Psoas muscle (tissue), 8 donors: ENCODE measurements at regions of chr1 and their contacts with region 1.

Region 1: DNA sequence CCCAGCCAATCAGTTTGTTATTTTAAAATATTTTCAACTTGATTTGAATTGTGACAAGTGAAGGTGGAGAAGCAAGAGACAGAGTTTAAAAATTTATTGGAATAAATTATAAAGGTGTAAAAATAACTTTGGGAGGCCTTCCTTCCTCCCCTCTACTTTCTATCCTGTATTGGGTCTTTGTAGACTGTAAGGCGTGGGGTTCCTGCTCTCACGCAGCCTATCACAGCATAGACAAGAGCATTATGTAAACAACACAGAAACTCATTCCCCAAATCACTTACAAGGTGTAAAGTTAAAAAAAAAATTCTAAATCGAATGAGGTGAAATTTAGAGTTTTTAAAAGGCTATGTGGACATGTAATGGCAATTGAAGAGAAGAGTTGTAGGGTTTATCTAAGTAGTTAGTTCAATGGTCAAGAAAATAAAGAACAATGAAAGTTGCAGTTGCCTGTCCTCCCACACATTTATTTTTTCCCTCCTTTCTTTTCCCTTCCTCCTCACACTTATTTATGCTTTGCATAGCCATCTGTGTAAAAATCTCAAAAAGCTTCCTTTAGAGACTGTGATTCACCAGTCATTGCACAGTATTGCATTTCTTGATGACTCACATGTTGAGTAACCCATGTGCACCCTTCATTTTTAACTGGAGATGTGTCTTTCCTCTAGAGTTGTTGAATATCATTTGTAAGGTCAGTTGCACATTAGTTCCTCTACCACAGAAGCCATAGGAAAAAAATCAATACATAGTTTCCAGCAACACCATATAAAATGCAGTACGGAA is 242.2 kb downstream of the PTPRC start:
- DNase-seq: no peak
- ATAC-seq: peak; percentile 42 to 71 (median 52)
- H3K4me3 ChIP-seq: no peak overlapping the region
- H3K27ac ChIP-seq: no peak overlapping the region
- H3K4me1 ChIP-seq: no peaks in the 10 kb centered on the region
- H3K27me3 ChIP-seq: no peaks in the 10 kb centered on the region
- CTCF ChIP-seq: no peak

Region 2: DNA sequence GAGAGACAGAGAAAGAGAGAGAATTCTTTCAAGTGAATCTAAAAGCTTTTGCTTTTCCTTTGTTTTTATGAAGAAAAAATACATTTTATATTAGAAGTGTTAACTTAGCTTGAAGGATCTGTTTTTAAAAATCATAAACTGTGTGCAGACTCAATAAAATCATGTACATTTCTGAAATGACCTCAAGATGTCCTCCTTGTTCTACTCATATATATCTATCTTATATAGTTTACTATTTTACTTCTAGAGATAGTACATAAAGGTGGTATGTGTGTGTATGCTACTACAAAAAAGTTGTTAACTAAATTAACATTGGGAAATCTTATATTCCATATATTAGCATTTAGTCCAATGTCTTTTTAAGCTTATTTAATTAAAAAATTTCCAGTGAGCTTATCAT is 124.5 kb before region 1 on chr1:
- intact Hi-C with region 1: no loop called
- DNase-seq: no peak
- ATAC-seq: peak in 1 of 4 donors; percentile 49
- H3K4me3 ChIP-seq: no peak overlapping the region
- H3K27ac ChIP-seq: no peak overlapping the region
- H3K4me1 ChIP-seq: no peaks in the 10 kb centered on the region
- H3K27me3 ChIP-seq: no peaks in the 10 kb centered on the region
- CTCF ChIP-seq: peak; percentile 45

Region 3: DNA sequence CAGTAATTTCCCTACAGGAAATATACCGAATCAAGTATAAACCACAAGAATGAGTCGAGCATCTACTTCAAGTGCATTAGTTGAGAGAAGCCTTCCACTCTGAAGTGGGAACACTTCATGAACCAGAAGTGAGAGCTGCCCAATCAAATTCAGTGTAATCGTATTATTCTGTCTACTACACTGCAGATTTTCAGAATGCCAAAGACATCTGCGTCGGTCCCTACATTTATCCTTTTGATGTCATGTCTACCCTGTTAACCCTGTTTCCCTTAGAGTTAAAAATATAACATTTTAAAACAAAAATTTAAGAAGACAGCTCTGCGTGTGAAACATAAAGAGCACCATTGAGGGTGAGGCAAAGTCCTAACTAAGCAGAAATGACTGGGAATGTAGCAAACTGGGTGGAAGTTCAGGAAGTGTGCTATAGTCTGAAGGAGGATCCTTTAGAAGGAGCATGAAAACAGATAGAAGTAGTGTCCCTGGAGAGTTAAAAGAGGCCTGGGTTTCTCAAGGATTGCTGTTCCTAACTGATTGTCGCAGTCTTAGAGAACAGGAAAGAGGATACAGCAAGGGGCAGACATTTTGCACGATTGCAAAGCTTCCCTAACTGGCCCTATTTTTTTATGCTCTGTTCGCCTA is 49.1 kb after region 1 on chr1:
- intact Hi-C with region 1: loop called in 1 of 2 experiments (anchors 5 kb)
- DNase-seq: no peak
- ATAC-seq: no peak
- H3K4me3 ChIP-seq: peak overlapping the region; percentile 37
- H3K27ac ChIP-seq: no peak overlapping the region
- H3K4me1 ChIP-seq: peaks cover under 1% of the 10 kb centered on the region
- H3K27me3 ChIP-seq: no peaks in the 10 kb centered on the region
- CTCF ChIP-seq: no peak

Region 4: DNA sequence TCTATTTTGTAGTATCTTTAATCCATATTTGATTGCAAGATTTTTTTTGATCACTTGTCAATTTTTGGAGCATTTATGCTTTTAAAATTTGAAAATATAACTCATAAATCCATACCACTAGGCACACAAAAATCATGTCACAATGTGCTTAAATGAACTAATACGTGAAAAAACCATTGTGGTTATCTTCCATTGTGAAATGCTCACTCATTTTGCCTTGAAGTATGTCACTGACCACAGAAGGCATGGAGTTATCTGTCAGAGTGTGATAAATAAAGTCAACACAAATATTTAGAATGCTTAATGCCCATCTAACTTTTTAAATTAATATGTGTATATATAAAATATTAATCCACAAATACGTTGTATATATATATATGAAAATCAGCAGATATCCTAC is 105.0 kb after region 1 on chr1:
- intact Hi-C with region 1: no loop called
- DNase-seq: no peak
- ATAC-seq: no peak
- H3K4me3 ChIP-seq: no peak overlapping the region
- H3K27ac ChIP-seq: no peak overlapping the region
- H3K4me1 ChIP-seq: no peaks in the 10 kb centered on the region
- H3K27me3 ChIP-seq: no peaks in the 10 kb centered on the region
- CTCF ChIP-seq: no peak

Region 5: DNA sequence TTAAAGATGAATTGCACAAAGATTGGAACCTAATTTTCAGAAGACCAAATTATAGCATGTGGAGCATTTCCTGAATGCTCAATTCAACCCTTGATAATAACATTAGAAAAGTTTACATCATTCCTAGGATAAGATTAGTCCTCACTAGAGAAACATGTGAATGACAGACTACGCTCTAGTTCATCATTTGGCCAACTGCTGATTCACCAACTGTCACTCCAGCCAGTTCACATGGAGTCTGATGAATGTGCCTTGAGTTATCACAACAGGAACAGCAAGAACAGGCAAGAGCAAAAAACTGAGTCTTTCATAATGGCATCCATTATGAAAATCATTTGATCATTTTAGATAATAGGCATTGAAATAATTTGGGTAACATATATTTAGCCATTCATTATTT is 173.7 kb after region 1 on chr1:
- intact Hi-C with region 1: no loop called
- DNase-seq: no peak
- ATAC-seq: no peak
- H3K4me3 ChIP-seq: no peak overlapping the region
- H3K27ac ChIP-seq: no peak overlapping the region
- H3K4me1 ChIP-seq: no peaks in the 10 kb centered on the region
- H3K27me3 ChIP-seq: no peaks in the 10 kb centered on the region
- CTCF ChIP-seq: no peak